AG04450 (cell line): ENCODE measurements at regions of chr2 and their contacts with region 1.

Region 1: GRCh38 chr2:197113275-197113711 is 186.8 kb upstream of the PGAP1 start:
- DNase-seq: no peak
- H3K4me3 ChIP-seq: no peak overlapping the region
- H3K27ac ChIP-seq: no peak overlapping the region
- H3K27me3 ChIP-seq: no peaks in the 10 kb centered on the region
- CTCF ChIP-seq: peak; percentile 63

Region 2: DNA sequence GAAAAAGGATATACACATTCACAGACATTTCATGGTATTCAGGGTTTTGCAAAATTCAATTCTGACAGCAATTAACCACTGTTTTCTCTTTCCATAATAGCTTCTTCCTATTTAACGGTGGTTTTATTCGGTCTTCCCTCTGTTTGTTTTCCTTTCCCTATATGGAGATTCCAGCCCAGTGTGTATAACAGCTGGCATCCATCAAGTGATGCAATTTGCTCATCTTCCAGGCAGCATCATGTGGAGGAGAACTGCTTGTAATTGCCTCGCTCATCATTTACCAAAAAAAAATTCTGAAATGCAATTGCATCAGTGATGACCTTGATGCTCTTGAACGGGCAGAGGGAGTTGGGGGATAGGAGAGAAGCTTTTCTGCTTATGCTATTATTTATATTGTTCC is 20.9 kb before region 1 on chr2:
- CTCF ChIA-PET with region 1: interaction called, 34 read pairs
- POLR2A ChIA-PET with region 1: no interaction called
- DNase-seq: peak; percentile 83
- H3K4me3 ChIP-seq: no peak overlapping the region
- H3K27ac ChIP-seq: no peak overlapping the region
- H3K27me3 ChIP-seq: no peaks in the 10 kb centered on the region
- CTCF ChIP-seq: no peak

Region 3: GRCh38 chr2:197137231-197137630 is 23.9 kb after region 1 on chr2:
- CTCF ChIA-PET with region 1: interaction called, 37 read pairs
- POLR2A ChIA-PET with region 1: no interaction called
- DNase-seq: no peak
- H3K4me3 ChIP-seq: no peak overlapping the region
- H3K27ac ChIP-seq: no peak overlapping the region
- H3K27me3 ChIP-seq: no peaks in the 10 kb centered on the region
- CTCF ChIP-seq: no peak

Region 4: DNA sequence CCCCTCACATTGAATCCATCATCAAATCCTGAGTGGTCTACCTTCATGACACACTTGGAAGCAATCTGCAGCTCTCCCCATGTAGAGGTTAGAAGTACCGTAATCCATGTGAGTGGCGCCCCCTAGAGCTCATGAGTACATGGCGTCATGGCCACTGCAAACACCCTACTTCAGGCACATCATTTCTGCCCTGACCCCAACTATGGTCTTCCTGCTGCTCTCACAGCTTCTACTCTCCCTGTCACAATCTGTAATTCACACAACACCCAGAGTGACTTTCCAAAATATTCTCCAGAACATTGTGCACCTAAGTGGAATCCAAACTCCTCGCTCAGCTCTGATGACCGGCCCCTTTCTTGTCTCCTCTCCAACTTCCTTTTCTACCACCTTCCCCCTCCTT is 55.4 kb after region 1 on chr2:
- CTCF ChIA-PET with region 1: interaction called, 59 read pairs
- POLR2A ChIA-PET with region 1: no interaction called
- DNase-seq: no peak
- H3K4me3 ChIP-seq: no peak overlapping the region
- H3K27ac ChIP-seq: no peak overlapping the region
- H3K27me3 ChIP-seq: no peaks in the 10 kb centered on the region
- CTCF ChIP-seq: peak; percentile 54

Region 5: GRCh38 chr2:197304556-197305011 is 191.3 kb after region 1 on chr2:
- CTCF ChIA-PET with region 1: interaction called, 25 read pairs
- POLR2A ChIA-PET with region 1: no interaction called
- DNase-seq: no peak
- H3K4me3 ChIP-seq: no peak overlapping the region
- H3K27ac ChIP-seq: no peak overlapping the region
- H3K27me3 ChIP-seq: no peaks in the 10 kb centered on the region
- CTCF ChIP-seq: no peak

Region 6: GRCh38 chr2:197378494-197379307 is 265.4 kb after region 1 on chr2:
- CTCF ChIA-PET with region 1: interaction called, 89 read pairs
- POLR2A ChIA-PET with region 1: no interaction called
- DNase-seq: no peak
- H3K4me3 ChIP-seq: no peak overlapping the region
- H3K27ac ChIP-seq: no peak overlapping the region
- H3K27me3 ChIP-seq: no peaks in the 10 kb centered on the region
- CTCF ChIP-seq: peak; percentile 77